Motor neuron (in vitro differentiated cells): ENCODE measurements at regions of chr17 and their contacts with region 1.

Region 1: DNA sequence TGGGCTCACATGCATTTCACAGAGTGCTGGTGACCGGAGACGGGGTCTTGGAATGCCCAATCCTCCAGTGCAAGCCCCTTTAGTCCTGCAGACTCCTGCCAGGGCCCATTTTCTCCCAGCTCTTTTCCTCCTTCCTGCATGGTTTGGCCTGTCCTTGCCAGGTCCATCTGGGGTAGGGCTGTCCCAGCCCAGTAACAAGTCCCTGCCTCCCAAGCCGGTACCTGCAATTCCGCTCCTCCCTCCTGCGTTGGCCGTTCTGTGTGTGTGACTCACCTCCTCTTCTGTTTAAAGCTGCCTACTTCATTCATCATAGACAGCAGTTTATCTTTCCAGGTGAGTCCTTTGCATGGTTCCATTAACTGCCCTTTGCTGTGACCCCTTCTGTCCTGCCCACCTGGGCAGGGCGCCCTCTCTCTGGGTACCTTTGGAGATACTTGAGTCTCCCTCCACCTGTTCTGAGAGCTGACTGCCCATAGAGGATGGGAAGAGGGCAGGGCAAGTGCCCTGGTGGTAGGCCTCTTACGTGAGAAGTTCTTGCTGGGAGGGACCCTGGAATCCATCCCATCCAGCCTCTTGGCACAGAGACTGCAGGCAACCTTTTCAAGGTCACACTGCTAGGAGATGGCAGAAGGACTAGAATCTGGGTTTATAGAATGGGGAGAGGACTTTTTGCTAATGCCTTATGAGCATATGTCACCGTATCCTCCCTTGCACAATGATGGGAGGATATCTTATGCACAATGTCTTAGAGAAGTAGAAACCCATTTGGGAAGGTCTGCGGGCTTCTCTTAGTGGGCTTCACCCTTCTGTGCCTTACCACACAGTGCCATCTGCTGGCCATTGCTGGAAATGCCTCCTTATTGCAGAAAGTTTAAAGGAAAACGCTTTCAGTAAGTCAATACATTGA is 29.7 kb upstream of the LGALS9 start:
- ATAC-seq: peak; percentile 39 to 78 (median 58)
- H3K4me3 ChIP-seq: no peak overlapping the region
- H3K27ac ChIP-seq: no peak overlapping the region
- H3K4me1 ChIP-seq: peaks cover 0 to 11% of the 10 kb centered on the region in 2 donors

Region 2: GRCh38 chr17:27181935-27182334 is 419.4 kb before region 1 on chr17:
- in situ Hi-C with region 1: no loop called
- ATAC-seq: no peak
- H3K4me3 ChIP-seq: no peak overlapping the region
- H3K27ac ChIP-seq: no peak overlapping the region
- H3K4me1 ChIP-seq: no peaks in the 10 kb centered on the region

Region 3: GRCh38 chr17:27236717-27237315 is 364.5 kb before region 1 on chr17:
- in situ Hi-C with region 1: loop called in 6 of 9 experiments (anchors 10 to 25 kb)
- ATAC-seq: peak; percentile 57 to 80 (median 67)
- H3K4me3 ChIP-seq: no peak overlapping the region
- H3K27ac ChIP-seq: no peak overlapping the region
- H3K4me1 ChIP-seq: peaks cover 0 to 5% of the 10 kb centered on the region in 2 donors

Region 4: DNA sequence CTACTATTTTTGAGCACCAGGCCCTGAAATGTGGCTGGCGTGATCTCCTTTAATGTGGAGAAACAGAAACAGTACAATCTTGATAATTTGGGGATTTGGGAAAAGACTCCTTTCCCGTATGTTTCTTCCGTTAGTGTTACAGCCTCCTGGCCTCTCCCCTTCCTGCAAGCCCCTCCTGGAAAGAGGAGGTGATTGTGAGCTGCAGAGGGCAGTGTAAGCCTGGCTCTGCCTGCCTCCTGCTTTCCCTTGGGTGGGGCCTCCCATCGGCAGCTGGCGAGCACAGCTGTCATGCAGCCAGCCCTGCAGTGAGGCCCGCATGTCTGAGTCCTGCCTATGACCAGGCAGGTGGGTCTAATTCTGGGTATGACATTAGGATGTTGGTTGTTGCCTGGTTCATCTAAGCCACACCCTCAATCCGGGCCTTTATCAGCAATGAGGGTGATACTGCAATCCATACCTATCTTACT is 356.1 kb before region 1 on chr17:
- in situ Hi-C with region 1: loop called in 5 of 9 experiments (anchors 25 kb)
- ATAC-seq: peak; percentile 85 to 100 (median 98)
- H3K4me3 ChIP-seq: no peak overlapping the region
- H3K27ac ChIP-seq: no peak overlapping the region
- H3K4me1 ChIP-seq: peaks cover 6 to 10% of the 10 kb centered on the region in 2 donors

Region 5: DNA sequence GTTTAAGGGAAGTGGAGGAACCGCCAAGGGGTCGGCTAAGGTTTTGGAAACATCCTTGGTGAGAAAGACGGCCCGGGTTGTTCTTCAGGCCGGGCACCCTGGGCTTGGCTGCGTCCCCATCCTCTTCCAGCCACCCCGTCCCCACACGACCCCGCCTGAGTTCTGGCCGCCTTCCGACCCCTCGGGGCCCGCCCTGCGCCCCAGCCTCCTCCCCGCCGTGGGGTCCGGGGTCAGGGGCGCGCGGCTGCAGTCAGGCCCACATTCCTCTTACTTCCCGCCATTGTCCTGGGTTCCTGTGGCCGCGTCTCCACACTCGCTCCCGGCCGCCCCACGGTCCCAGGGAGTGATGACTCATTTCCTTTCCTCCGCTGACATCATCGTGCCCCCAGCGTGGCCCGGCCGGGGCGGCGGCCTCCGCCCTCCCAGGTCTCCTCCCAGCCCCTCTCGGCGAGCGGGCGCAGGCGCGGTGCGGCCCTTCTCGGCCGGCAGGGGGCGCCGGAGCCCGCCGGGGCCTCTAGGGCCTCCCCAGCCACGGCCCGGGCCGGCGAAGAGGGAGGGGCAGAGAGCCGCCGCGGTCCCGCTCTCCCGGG is 247.8 kb before region 1 on chr17:
- in situ Hi-C with region 1: loop called in 4 of 9 experiments (anchors 10 to 25 kb)
- ATAC-seq: peak; percentile 82 to 97 (median 94)
- H3K4me3 ChIP-seq: peak overlapping the region; percentile 37 to 57 (median 50)
- H3K27ac ChIP-seq: peak overlapping the region; percentile 83 to 92
- H3K4me1 ChIP-seq: peaks cover 7 to 9% of the 10 kb centered on the region in 2 donors

Region 6: DNA sequence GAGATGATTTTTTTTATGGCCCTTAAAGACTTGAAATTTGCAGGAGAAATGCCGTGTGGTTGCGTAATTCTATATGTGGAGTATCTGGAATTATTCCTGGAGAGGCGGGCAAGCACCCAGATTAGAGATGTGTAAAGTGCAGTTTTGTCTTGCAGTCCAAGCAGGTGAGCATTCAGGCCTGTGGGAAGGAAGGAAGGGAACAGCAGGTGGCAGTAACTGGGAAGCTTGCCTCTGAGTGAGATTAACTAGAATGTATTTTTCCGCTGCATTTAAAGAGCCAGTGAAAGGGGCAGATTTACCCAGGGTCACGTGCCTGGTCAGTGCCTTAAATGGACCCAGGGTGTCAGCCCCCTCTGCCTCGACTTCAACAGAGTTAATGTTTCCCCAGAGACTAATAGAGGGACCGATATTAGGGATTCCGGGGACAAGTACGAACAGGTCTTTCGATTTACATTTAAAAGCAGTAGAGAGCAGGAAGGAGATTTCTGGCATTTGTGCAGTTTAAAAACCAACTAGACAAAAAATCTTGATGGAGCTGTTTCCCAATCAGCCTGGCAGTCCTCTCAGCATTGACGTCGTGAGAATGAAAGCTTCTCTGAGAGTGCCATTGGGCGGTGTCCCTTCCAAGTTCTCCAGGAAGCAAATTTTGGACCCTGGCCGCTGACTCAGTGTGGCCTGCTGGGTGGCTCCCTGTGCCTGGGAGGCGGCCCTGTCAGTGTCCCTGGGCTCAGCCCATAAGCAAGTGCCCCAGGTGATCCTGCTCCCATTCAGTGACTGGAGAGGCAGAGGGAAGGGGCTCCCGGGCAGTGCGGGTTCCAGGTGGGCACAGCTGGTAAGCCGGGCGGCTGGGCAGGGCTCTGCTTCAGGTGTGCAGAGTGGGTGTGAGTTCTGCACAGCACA is 106.9 kb before region 1 on chr17:
- in situ Hi-C with region 1: loop called in 1 of 9 experiments (anchors 10 kb)
- ATAC-seq: peak; percentile 54 to 88 (median 74)
- H3K4me3 ChIP-seq: no peak overlapping the region
- H3K27ac ChIP-seq: peak overlapping the region in 1 of 2 donors; percentile 62
- H3K4me1 ChIP-seq: peaks cover 68 to 71% of the 10 kb centered on the region in 2 donors

Region 7: GRCh38 chr17:27506348-27507231 is 94.7 kb before region 1 on chr17:
- in situ Hi-C with region 1: loop called in 1 of 9 experiments (anchors 25 kb)
- ATAC-seq: peak in 1 of 8 experiments; percentile 10
- H3K4me3 ChIP-seq: no peak overlapping the region
- H3K27ac ChIP-seq: no peak overlapping the region
- H3K4me1 ChIP-seq: peaks cover 0 to 15% of the 10 kb centered on the region in 2 donors

Region 8: DNA sequence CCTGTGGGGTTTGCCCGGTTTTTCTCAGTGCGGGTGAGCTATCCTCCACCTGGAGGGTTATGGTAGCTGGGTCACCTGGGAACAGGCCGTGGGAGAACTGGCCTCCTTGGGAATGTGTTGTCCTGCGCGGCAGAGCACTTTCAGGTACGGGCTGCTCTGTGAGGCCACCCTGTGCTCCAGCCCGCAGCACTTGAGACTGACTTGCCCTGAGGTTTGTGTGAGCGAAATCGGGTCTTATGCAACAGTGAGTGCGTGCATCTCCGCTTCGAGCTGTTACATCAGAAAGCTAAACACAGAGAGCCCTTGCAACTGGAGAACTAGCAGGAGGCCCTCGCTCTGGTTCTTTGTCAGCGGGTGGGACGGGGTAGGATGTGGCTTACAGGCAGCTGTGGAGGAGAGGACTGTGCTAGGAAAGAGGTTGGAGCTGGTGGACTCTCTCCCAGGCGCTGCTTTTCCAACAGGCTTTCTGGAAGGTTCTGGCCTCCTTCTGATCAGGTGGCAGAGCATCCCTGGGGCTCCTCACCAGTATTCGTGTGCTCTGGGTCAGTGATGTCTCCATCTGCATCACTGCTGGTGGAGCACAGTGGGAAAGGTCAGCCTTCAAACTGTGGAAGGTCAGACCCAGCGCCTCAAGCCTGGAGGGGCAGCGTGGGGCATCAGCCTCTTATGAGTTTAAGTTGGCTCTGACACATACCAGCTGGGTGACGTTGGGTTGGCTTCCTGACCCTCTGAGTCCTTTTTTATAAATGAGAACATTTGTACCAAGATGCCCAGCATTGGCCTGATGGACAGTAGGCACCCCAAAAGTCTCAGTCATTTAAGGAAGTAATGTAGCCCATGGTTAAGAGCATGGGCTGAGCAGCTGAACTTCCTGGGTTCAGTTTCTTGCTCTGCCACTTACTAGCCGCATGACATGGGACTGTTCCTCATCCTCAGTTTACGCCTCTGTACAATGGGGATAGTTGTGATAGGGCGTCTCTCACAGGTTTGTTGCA is 68.8 kb before region 1 on chr17:
- in situ Hi-C with region 1: loop called in 1 of 9 experiments (anchors 10 kb)
- ATAC-seq: peak in 5 of 8 experiments; percentile 16 to 71 (median 49)
- H3K4me3 ChIP-seq: no peak overlapping the region
- H3K27ac ChIP-seq: peak overlapping the region in 1 of 2 donors; percentile 33
- H3K4me1 ChIP-seq: peaks cover 42 to 61% of the 10 kb centered on the region in 2 donors